Transverse colon (tissue), 4 donors: ENCODE measurements at regions of chr9 and their contacts with region 1.

Region 1: DNA sequence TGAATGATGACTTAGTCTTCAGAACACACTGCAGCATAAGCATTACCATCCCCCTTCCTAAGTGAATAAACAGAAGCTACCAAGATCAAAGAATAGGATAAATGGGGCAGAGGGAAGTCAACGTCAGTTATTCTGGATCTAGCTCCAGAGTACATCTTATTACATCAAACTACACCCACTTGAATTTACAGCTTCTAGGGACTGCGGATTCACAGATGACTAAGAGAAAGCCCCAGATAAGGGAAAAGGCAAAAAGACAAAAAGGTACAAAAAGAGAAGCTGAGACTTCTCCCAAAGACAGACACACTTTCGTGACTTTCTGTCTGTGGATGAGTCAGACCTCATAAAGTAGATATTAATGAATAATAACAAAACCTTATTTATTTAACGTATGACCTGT is 457.9 kb upstream of the BRINP1 start:
- DNase-seq: no peak
- H3K4me3 ChIP-seq: no peak overlapping the region
- H3K27ac ChIP-seq: no peak overlapping the region
- H3K4me1 ChIP-seq: no peaks in the 10 kb centered on the region
- H3K27me3 ChIP-seq: no peaks in the 10 kb centered on the region
- CTCF ChIP-seq: no peak
- EP300 ChIP-seq: no peak
- POLR2A ChIP-seq: no peak

Region 2: DNA sequence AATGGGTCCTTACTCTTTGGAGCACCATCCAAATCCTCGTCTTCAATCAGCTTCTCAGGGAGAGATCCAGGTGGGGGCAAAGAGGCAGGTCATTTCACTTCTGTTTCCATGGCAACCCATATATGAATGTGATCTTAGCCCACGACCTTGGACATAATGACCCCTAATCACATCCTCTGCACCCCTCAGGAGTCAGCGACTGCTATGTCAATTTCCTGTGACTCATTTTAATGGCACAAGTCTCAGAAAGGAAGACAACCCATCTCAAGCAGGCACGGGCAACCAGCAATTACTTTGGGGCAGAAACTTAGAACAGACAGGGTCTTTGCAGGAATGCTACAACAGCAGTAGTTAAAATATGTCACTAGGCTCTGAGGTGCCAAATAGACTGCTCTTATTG is 1531.7 kb before region 1 on chr9:
- in situ Hi-C with region 1: no loop called
- intact Hi-C with region 1: no loop called
- DNase-seq: no peak
- H3K4me3 ChIP-seq: no peak overlapping the region
- H3K27ac ChIP-seq: no peak overlapping the region
- H3K4me1 ChIP-seq: no peaks in the 10 kb centered on the region
- H3K27me3 ChIP-seq: no peaks in the 10 kb centered on the region
- CTCF ChIP-seq: no peak
- EP300 ChIP-seq: no peak
- POLR2A ChIP-seq: no peak

Region 3: DNA sequence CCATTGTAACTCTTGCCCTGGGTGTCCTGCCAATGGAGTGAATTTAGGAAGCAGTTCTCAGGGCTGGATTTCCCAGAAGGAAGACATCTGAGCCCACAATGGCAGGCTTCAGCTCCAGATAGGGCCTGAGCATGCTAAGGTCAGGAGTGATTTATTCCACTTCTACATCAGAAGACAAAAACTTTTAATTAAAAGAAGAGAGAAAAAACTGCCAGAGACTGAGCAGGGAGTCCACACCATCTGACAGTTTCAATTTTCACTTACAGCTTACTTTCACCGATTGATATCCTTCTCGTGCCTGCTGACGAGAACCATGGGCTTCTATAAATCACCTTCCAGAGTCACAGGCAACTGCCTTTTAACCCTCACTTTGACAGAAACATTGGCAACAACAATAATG is 229.6 kb before region 1 on chr9:
- in situ Hi-C with region 1: no loop called
- intact Hi-C with region 1: no loop called
- DNase-seq: no peak
- H3K4me3 ChIP-seq: no peak overlapping the region
- H3K27ac ChIP-seq: no peak overlapping the region
- H3K4me1 ChIP-seq: no peaks in the 10 kb centered on the region
- H3K27me3 ChIP-seq: no peaks in the 10 kb centered on the region
- CTCF ChIP-seq: no peak
- EP300 ChIP-seq: no peak
- POLR2A ChIP-seq: no peak

Region 4: DNA sequence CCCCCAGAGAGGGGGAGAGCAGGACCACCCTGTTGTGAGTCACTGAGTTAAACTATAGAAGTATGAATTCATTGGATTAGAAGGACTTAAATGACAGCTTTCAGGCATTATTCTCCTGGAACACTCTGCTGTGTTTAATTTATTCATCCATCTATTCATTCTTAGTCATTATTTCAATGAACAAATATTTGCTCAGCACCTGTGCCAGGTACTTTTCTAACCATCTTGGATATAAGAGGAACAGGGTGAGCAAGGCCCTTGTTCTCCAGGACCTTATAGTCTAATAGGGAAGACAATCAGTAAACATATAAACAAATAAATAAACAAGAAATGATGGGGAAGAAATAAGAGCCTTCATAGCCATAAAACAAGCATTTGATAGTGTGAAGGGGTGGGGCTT is 26.0 kb after region 1 on chr9:
- in situ Hi-C with region 1: no loop called
- intact Hi-C with region 1: loop called (anchors 1 kb)
- DNase-seq: no peak
- H3K4me3 ChIP-seq: no peak overlapping the region
- H3K27ac ChIP-seq: no peak overlapping the region
- H3K4me1 ChIP-seq: no peaks in the 10 kb centered on the region
- H3K27me3 ChIP-seq: no peaks in the 10 kb centered on the region
- CTCF ChIP-seq: no peak
- EP300 ChIP-seq: no peak
- POLR2A ChIP-seq: no peak

Region 5: GRCh38 chr9:119861842-119862241 is 34.7 kb after region 1 on chr9:
- in situ Hi-C with region 1: no loop called
- intact Hi-C with region 1: loop called (anchors 1 kb)
- DNase-seq: no peak
- H3K4me3 ChIP-seq: no peak overlapping the region
- H3K27ac ChIP-seq: no peak overlapping the region
- H3K4me1 ChIP-seq: no peaks in the 10 kb centered on the region
- H3K27me3 ChIP-seq: no peaks in the 10 kb centered on the region
- CTCF ChIP-seq: no peak
- EP300 ChIP-seq: no peak
- POLR2A ChIP-seq: no peak